ENCODE measurements at regions of chr1 and their contacts with region 1.

Region 1: DNA sequence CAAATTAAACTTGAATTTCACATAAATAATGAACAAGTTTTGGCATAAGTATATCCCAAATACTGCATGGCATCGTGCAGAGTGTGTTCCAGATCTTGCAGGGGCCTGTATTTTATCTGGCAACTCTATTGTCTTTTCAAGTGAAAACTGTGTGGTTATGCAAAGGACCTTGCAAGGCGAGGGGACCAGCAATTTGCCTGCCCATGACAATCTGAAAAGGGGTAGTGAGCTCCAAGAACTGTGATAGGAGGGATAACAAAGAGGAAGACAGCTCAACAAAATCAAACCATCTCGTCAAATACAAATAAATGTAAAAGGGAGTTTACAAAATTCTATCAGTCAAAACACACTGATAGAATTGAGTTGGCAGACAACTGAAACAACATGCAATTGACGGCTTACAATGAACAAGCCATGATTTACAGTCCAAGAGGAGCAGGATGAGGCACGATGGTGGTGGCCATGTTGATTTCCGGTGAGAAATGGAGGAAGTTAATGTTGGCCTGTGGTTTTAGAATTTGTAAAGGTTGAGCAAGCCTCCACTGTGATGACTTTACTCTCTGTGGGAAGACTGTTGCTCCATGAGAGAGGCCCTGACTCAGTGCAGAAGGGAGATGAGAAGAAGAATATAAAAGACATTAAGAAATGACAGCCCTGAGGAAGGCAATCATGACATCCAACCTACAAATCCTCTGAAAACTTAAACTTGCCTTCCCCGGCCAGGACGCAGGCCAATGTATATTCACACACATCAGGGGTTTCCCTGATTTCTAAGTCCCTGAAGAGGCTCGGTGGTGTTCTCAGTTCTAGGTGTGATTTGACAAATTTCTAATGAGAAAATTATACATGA is 132.2 kb downstream of the ADSS2 start:
- DNase-seq: peak; percentile 59
- H3K4me3 Mint-ChIP-seq: peak overlapping the region; percentile 62
- H3K27ac Mint-ChIP-seq: peak overlapping the region; percentile 89
- H3K4me1 Mint-ChIP-seq: peaks cover 54% of the 10 kb centered on the region
- H3K27me3 Mint-ChIP-seq: peaks cover 1% of the 10 kb centered on the region

Region 2: DNA sequence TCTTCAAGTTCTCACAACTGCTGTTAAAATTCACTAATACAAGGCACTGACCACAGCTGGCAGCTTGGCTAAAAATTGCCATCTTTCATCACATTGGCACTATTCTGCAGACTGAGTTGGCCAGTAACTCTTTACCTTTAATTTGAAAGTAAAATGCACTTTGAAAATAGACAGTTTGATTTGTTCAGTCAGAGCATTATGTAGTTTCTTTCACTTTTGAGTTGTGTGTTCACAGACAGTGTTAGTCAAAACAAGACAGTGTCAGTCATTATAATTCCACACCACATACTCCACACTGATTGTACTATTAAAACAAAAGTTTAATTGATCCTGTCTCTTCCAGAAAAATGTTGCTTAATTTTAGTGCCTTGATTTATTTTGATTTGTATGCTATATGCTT is 903.0 kb before region 1 on chr1:
- intact Hi-C with region 1: loop called (anchors 2 kb)
- DNase-seq: no peak
- H3K4me3 Mint-ChIP-seq: peak overlapping the region; percentile 39
- H3K27ac Mint-ChIP-seq: peak overlapping the region; percentile 64
- H3K4me1 Mint-ChIP-seq: peaks cover 66% of the 10 kb centered on the region
- H3K27me3 Mint-ChIP-seq: no peaks in the 10 kb centered on the region

Region 3: GRCh38 chr1:243623841-243624240 is 695.7 kb before region 1 on chr1:
- intact Hi-C with region 1: no loop called
- DNase-seq: no peak
- H3K4me3 Mint-ChIP-seq: no peak overlapping the region
- H3K27ac Mint-ChIP-seq: no peak overlapping the region
- H3K4me1 Mint-ChIP-seq: no peaks in the 10 kb centered on the region
- H3K27me3 Mint-ChIP-seq: no peaks in the 10 kb centered on the region

Region 4: GRCh38 chr1:243837907-243838535 is 481.5 kb before region 1 on chr1:
- intact Hi-C with region 1: loop called (anchors 2 kb)
- DNase-seq: no peak
- H3K4me3 Mint-ChIP-seq: peak overlapping the region; percentile 9
- H3K27ac Mint-ChIP-seq: peak overlapping the region; percentile 34
- H3K4me1 Mint-ChIP-seq: peaks cover 33% of the 10 kb centered on the region
- H3K27me3 Mint-ChIP-seq: no peaks in the 10 kb centered on the region

Region 5: GRCh38 chr1:244302889-244303613 is 16.5 kb before region 1 on chr1:
- intact Hi-C with region 1: loop called (anchors 1 kb)
- DNase-seq: no peak
- H3K4me3 Mint-ChIP-seq: no peak overlapping the region
- H3K27ac Mint-ChIP-seq: no peak overlapping the region
- H3K4me1 Mint-ChIP-seq: peaks cover 12% of the 10 kb centered on the region
- H3K27me3 Mint-ChIP-seq: peaks cover 4% of the 10 kb centered on the region

Region 6: GRCh38 chr1:244435562-244436205 is 116.2 kb after region 1 on chr1:
- intact Hi-C with region 1: loop called (anchors 1 kb)
- DNase-seq: no peak
- H3K4me3 Mint-ChIP-seq: peak overlapping the region; percentile 76
- H3K27ac Mint-ChIP-seq: peak overlapping the region; percentile 97
- H3K4me1 Mint-ChIP-seq: peaks cover 38% of the 10 kb centered on the region
- H3K27me3 Mint-ChIP-seq: no peaks in the 10 kb centered on the region

Region 7: DNA sequence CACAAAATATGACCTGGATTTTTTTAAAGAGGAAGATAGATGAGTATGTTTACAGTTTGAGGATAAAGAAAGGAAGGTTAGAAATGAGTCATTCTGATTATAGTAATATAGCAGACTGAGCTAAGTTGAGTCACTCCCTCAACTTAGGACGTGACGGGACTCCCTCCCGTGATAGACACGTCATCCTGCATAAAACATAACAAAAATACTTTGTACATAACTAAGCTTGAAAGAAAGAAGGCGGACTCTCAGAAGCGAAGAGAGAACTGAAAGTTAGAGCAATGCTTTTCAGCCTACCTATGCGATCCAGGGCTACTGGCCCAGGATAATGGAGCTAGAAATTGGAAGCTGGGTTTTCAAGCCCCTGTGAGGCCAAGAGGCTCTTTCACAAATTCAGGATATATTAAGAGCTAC is 280.4 kb after region 1 on chr1:
- intact Hi-C with region 1: loop called (anchors 2 kb)
- DNase-seq: peak; percentile 54
- H3K4me3 Mint-ChIP-seq: peak overlapping the region; percentile 79
- H3K27ac Mint-ChIP-seq: peak overlapping the region; percentile 94
- H3K4me1 Mint-ChIP-seq: peaks cover 22% of the 10 kb centered on the region
- H3K27me3 Mint-ChIP-seq: peaks cover 9% of the 10 kb centered on the region

Region 8: GRCh38 chr1:244864253-244865027 is 544.9 kb after region 1 on chr1 and contains the start of gene HNRNPU:
- intact Hi-C with region 1: loop called (anchors 2 kb)
- DNase-seq: peak; percentile 97
- H3K4me3 Mint-ChIP-seq: peak within 1 kb of the TSS; percentile 87
- H3K27ac Mint-ChIP-seq: peak within 1 kb of the TSS; percentile 95
- H3K4me1 Mint-ChIP-seq: peaks cover 41% of the 10 kb centered on the region
- H3K27me3 Mint-ChIP-seq: no peaks in the 10 kb centered on the region
- total RNA-seq, gene HNRNPU: 566 and 573 TPM in 2 replicates

Measured in activated T-helper 1 cell treated with anti-CD3 and anti-CD28 coated beads, Interleukin-12 subunit alpha, Interleukin-12 subunit beta, Interleukin-2, Interleukin-4 antibody, amounts not matched to agents 30 ng/mL and 10 ng/mL and 1 ng/mL, durations not matched to agents 14 hours and 24 hours and 36 hours (primary cell).